Endothelial cell of umbilical vein (primary cell): ENCODE measurements at regions of chr13 and their contacts with region 1.

Region 1: GRCh38 chr13:37960427-37960826 is 90.9 kb upstream of the TRPC4 start:
- DNase-seq: no peak
- H3K4me3 ChIP-seq: no peak overlapping the region
- H3K27ac ChIP-seq: no peak overlapping the region
- H3K4me1 ChIP-seq: no peaks in the 10 kb centered on the region
- H3K27me3 ChIP-seq: no peaks in the 10 kb centered on the region
- CTCF ChIP-seq: peak in 1 of 2 donors; percentile 14
- POLR2A ChIP-seq: no peak

Region 2: GRCh38 chr13:37014609-37015008 is 945.8 kb before region 1 on chr13:
- CTCF ChIA-PET with region 1: no interaction called
- POLR2A ChIA-PET with region 1: no interaction called
- dilution Hi-C with region 1: no loop called
- intact Hi-C with region 1: no loop called
- DNase-seq: no peak
- H3K4me3 ChIP-seq: no peak overlapping the region
- H3K27ac ChIP-seq: no peak overlapping the region
- H3K4me1 ChIP-seq: no peaks in the 10 kb centered on the region
- H3K27me3 ChIP-seq: no peaks in the 10 kb centered on the region
- CTCF ChIP-seq: no peak
- POLR2A ChIP-seq: no peak

Region 3: DNA sequence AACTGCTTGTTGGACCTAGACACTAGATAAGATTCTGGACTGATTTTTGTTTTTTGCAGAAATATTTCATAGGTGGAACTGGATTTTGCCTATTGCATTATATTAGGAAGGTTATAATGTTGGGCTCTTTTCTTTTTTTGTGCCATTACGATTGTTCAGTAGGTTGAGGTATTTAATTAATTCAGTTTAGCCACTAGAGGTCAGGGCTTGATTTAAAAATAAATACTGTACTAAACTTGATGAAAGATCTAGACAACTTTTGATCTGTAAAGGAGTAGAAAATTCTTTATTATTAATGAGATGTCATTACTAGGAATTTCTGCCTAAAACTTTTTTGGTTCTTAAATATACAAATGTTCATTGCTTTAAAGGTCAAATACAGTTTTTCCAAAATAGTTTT is 885.7 kb before region 1 on chr13:
- CTCF ChIA-PET with region 1: no interaction called
- POLR2A ChIA-PET with region 1: no interaction called
- dilution Hi-C with region 1: no loop called
- intact Hi-C with region 1: no loop called
- DNase-seq: peak; percentile 30
- H3K4me3 ChIP-seq: no peak overlapping the region
- H3K27ac ChIP-seq: no peak overlapping the region
- H3K4me1 ChIP-seq: no peaks in the 10 kb centered on the region
- H3K27me3 ChIP-seq: no peaks in the 10 kb centered on the region
- CTCF ChIP-seq: peak in 1 of 2 donors; percentile 17
- POLR2A ChIP-seq: no peak

Region 4: GRCh38 chr13:37944869-37945442 is 15.5 kb before region 1 on chr13:
- CTCF ChIA-PET with region 1: interaction called, 11 read pairs
- POLR2A ChIA-PET with region 1: no interaction called
- dilution Hi-C with region 1: no loop called
- intact Hi-C with region 1: no loop called
- DNase-seq: no peak
- H3K4me3 ChIP-seq: no peak overlapping the region
- H3K27ac ChIP-seq: no peak overlapping the region
- H3K4me1 ChIP-seq: no peaks in the 10 kb centered on the region
- H3K27me3 ChIP-seq: no peaks in the 10 kb centered on the region
- CTCF ChIP-seq: no peak
- POLR2A ChIP-seq: no peak